ENCODE measurements at regions of chrX and their contacts with region 1.

Region 1: GRCh38 chrX:42943051-42943974 is 165.3 kb upstream of the PPP1R2C start:
- DNase-seq: no peak
- ATAC-seq: peak; percentile 90
- H3K4me3 ChIP-seq: no peak overlapping the region
- H3K27ac ChIP-seq: peak overlapping the region; percentile 82
- H3K4me1 ChIP-seq: peaks cover 8% of the 10 kb centered on the region
- H3K27me3 ChIP-seq: no peaks in the 10 kb centered on the region
- CTCF ChIP-seq: no peak
- EP300 ChIP-seq: peak; percentile 31 to 67; a peak in 1 of 4 replicates
- POLR2A ChIP-seq: no peak
- RAD21 ChIP-seq: peak; percentile 29; the same call in 1 of the 2 replicates

Region 2: DNA sequence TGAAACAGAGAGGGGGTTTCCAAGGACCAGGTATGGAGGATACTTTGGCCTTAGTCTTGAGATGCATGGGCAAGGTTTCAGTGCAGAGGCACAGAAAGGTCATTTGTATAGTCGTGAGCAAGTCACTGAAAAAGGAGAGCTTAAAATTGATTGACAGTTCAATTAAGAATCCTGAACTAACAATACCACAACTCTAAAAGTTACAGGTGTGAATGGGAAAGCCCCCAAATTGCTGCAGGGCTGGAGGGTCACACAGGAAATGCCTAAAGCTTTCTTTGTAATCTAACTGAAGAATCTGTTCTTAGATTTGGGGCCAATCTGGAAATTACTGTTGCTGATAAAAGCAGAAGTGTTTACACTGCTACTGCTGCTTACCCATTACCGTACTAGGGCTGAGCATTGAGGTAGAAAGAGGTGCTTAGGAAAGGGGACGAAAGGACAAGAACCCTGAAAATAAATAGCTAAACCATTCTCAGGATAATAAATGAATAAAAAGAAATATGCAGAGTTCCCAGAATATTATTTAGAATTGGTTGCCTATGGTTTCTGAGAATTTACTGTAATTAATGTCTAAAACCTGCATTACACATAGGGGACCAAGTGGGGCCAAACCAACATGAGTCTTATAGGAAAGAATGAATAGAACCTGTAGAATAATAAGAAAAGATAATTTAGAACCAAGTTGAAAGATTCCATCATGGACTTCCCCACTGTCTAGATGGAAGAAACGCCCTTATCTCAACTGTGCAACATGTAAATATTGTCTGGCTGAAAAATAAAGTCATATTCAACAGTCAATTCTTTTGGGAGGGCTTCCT is 73.4 kb before region 1 on chrX:
- CTCF ChIA-PET with region 1: no interaction called
- POLR2A ChIA-PET with region 1: no interaction called
- RAD21 ChIA-PET with region 1: interaction called, 3 read pairs
- SMC1A ChIA-PET with region 1: no interaction called
- in situ Hi-C with region 1: no loop called
- intact Hi-C with region 1: loop called (anchors 5 kb)
- DNase-seq: peak; percentile 72
- ATAC-seq: peak; percentile 92
- H3K4me3 ChIP-seq: no peak overlapping the region
- H3K27ac ChIP-seq: peak overlapping the region; percentile 1; the same call in 1 of the 2 replicates
- H3K4me1 ChIP-seq: peaks cover 6% of the 10 kb centered on the region
- H3K27me3 ChIP-seq: no peaks in the 10 kb centered on the region
- CTCF ChIP-seq: no peak
- EP300 ChIP-seq: peak; percentile 48 to 75; a peak in 1 of 4 replicates
- POLR2A ChIP-seq: no peak
- RAD21 ChIP-seq: no peak

Region 3: DNA sequence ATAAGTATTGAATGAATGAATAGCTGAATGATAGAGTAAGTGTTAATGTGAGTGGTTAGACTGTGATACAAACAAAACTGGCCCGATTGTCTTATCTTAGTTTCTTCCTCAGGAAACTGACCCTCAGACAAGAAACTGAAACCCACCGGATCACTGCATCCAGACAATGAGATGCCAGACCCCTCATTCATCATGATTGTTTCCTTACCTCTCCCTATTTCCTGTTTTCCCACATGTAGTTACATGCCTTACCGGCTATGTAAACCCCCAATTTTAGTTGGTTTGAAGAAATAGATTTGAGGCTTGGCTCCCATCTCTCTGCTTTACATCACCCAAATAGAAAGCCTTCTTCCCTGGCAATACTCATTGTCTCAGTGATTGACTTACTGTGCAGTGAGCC is 53.5 kb after region 1 on chrX:
- CTCF ChIA-PET with region 1: no interaction called
- POLR2A ChIA-PET with region 1: no interaction called
- RAD21 ChIA-PET with region 1: no interaction called
- SMC1A ChIA-PET with region 1: no interaction called
- in situ Hi-C with region 1: no loop called
- intact Hi-C with region 1: no loop called
- DNase-seq: no peak
- ATAC-seq: peak; percentile 84
- H3K4me3 ChIP-seq: no peak overlapping the region
- H3K27ac ChIP-seq: no peak overlapping the region
- H3K4me1 ChIP-seq: no peaks in the 10 kb centered on the region
- H3K27me3 ChIP-seq: no peaks in the 10 kb centered on the region
- CTCF ChIP-seq: no peak
- EP300 ChIP-seq: no peak
- POLR2A ChIP-seq: no peak
- RAD21 ChIP-seq: no peak